ENCODE measurements at regions of chr7 and their contacts with region 1.

Region 1: GRCh38 chr7:39580149-39580874 is 14.1 kb downstream of the YAE1 start:
- ATAC-seq: peak; percentile 83 to 99 (median 95)
- H3K4me3 ChIP-seq: no peak overlapping the region
- H3K27ac ChIP-seq: no peak overlapping the region
- H3K4me1 ChIP-seq: peaks cover 0 to 10% of the 10 kb centered on the region in 2 donors

Region 2: DNA sequence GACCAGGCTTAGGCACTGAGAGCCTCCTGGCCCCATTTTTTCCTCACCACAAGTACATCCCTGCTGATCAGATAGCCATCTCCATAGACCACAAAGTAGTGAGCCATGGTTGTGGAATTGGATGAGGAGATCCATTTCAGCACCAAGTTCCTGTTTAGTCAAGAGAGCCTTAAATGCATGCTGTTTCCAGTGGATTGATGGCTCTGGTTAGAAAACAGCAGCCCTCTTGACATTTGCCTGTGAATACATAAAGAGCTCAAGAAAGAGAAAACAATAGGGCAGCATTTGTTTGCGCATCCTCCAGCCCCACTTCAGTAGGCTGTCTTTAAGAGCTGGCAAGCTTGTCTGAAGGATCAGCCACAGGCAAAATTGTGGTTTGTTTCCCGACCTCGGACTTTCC is 351.4 kb before region 1 on chr7:
- in situ Hi-C with region 1: no loop called
- ATAC-seq: peak in 4 of 8 experiments; percentile 2 to 44 (median 32)
- H3K4me3 ChIP-seq: no peak overlapping the region
- H3K27ac ChIP-seq: no peak overlapping the region
- H3K4me1 ChIP-seq: peaks cover 14 to 25% of the 10 kb centered on the region in 2 donors

Region 3: DNA sequence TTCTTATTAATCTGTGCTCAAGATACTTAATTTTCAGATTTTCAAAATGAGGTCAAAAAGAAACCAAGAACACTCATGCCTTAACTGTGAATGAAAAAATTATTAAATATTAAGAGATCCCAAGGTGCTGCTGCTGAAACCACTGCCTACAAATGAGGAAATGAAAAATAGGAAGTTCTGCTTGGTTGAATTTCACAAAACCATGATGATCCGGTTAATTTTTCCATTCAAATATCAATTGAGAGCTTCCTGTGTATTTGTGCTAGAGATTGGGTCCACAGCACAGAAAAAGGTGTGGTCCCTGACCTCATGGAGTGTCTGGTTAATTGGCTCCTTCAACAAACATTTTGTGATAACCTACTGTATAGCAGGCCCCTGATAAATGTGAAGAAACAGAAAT is 146.8 kb before region 1 on chr7:
- in situ Hi-C with region 1: no loop called
- ATAC-seq: no peak
- H3K4me3 ChIP-seq: no peak overlapping the region
- H3K27ac ChIP-seq: no peak overlapping the region
- H3K4me1 ChIP-seq: peaks cover 28 to 30% of the 10 kb centered on the region in 2 donors

Region 4: DNA sequence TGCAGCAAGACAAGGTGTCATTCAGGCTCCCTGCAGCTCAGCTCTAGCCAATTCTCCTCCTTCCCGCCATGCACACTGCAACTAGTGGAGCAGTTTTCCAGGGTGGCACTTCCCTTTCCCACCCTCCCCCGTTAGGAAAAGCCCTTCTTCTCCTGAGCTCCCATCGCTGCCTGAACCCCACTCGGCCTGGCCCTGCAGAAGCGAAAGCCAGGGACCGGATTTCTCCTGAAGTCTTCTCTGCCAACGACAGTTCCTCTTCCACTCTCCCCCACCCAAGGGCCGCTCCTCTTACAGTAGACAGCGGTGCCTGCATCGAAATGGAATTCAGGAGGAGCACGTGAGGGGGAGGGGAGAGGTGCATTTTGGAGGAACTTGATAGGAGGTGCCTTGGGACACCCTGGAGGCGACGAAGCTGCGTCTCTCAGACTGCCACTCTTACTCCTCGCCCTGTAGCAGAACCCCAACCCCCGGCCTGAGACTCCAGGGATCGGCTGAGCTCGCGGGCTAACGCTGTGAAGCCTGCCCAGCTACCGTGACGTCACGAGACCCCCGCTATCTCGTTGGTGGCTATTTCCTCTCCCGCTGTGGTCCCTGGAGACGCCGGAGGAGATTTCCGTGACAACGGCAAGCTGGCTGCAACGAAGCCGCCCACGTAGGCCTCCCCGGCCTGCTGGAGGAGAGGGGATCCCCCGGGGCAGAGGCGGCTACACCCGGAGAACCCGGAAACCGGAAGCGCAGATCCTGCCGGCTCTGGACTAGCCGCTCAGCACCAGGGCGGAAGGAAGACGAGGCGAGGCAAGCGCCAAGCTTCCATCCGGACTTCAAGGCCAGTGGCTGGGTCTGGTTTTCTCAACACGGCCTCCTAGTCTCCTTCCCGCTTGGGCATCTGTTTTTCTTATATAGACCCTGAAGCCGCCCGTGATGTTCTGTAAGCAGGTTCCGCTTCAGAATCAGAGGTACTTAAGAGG is 152.8 kb after region 1 on chr7:
- in situ Hi-C with region 1: loop called in 3 of 9 experiments (anchors 25 kb)
- ATAC-seq: peak; percentile 88 to 96 (median 95)
- H3K4me3 ChIP-seq: peak overlapping the region; percentile 44 to 47 (median 46)
- H3K27ac ChIP-seq: peak overlapping the region; percentile 58 to 66
- H3K4me1 ChIP-seq: peaks cover 19 to 23% of the 10 kb centered on the region in 2 donors

Region 5: GRCh38 chr7:39746103-39746819 is 165.9 kb after region 1 on chr7:
- in situ Hi-C with region 1: loop called in 6 of 9 experiments (anchors 10 to 25 kb)
- ATAC-seq: peak; percentile 69 to 93 (median 78)
- H3K4me3 ChIP-seq: no peak overlapping the region
- H3K27ac ChIP-seq: no peak overlapping the region
- H3K4me1 ChIP-seq: peaks cover 0 to 2% of the 10 kb centered on the region in 2 donors

Region 6: DNA sequence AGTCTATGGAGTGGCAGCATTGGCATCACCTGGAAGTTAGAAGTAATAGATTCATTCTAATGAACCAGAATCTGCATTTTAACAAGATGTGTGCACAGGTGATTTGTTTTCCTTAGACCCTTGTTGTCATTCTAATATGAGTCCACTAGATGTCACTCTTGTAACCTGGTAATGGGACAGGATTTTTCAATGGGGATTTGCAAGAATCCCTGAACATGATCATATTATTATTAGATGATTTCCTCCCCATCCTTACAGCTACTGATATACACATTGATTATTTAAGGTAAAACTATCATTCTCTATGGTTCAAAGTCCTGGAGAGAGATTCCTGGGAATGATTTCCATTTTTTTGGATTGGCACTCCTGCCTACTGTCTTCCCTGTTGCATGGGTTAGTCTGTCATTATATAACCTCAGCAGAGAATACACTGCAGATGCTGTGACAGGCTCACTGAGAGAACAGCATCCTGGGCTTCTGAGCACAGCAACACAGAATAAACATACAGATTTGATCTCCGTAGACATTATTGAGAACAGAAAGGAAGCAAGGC is 749.4 kb after region 1 on chr7:
- in situ Hi-C with region 1: no loop called
- ATAC-seq: peak in 5 of 8 experiments; percentile 71 to 90 (median 80)
- H3K4me3 ChIP-seq: no peak overlapping the region
- H3K27ac ChIP-seq: no peak overlapping the region
- H3K4me1 ChIP-seq: peaks cover 0 to 5% of the 10 kb centered on the region in 2 donors